Left cardiac atrium (tissue), 4 donors: ENCODE measurements at regions of chr5 and their contacts with region 1.

Region 1: DNA sequence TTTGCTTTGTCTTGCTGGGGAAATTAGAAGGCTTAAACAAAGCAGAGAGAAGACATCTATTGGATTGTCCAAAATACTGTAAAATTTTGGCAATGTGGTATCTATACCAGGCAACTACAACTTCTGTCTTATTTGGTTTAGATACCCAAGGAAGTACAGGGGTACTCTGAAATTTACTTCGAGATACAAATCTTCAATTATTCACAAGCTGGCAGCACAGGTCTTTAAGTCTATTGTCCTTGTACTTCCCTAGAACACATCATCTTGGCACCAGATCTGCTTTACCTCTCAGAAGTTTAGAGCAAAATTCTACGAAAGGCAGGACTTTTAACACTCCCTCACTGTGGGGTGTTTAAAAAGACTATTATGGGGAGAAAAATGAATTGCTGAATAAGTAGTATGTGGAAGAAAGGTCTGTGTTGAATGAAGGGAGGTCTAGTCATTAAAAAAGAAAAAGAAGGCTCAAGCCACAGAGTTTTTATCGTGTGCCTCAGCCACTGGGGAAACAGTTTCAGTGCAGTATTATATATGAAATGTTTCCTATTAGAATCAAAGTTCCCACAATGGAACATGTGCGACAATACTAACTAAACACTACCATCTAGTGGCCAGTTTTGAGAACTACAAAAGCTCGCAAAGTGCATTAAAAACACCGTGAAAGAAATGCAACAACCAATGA is 93.7 kb downstream of the PDE4D start:
- DNase-seq: no peak
- ATAC-seq: peak; percentile 65 to 77

Region 2: DNA sequence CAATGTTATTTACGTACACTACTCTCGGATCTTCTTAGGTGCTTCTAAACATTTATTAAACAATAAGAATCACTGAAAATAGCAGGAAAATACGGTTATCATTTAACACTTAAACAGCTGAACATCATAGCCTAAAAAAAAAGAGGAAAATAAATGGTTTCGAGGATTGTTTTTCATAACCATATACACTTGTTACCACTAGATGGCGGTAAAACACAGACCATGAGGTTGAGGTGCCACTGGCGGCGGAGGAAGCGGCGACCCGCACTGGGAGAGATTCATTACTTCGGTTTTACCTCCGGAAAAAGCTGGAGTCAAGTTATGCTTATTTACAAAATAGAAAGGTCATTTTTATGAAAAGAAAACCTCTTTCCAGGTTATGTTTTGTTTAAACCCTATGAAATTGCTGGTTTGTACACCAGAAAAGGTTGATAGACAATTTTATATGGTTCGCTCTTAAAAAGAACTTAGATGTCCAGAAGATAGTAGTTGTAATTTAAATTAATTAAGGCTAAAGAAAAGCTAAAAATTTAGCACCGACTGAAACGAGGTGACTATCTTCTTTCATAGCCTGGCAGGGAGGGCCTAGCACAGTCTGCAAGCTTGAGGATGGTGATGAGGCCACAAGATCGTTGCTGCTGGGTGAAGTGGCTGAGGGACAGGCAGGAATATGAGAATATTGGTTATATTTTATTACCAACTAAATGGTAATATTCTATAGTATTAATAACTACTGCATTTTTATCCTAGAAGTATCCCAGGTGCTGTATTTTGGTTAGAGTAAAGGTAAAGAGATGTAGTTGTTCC is 611.2 kb before region 1 on chr5:
- intact Hi-C with region 1: loop called in 1 of 2 experiments (anchors 10 kb)
- DNase-seq: peak; percentile 79
- ATAC-seq: peak; percentile 80 to 82

Region 3: GRCh38 chr5:59390074-59390659 is 409.6 kb before region 1 on chr5:
- intact Hi-C with region 1: loop called (anchors 2 to 5 kb)
- DNase-seq: no peak
- ATAC-seq: no peak

Region 4: GRCh38 chr5:59506285-59506877 is 293.4 kb before region 1 on chr5:
- intact Hi-C with region 1: loop called in 1 of 2 experiments (anchors 5 kb)
- DNase-seq: no peak
- ATAC-seq: no peak

Region 5: GRCh38 chr5:59540366-59540765 is 259.4 kb before region 1 on chr5:
- intact Hi-C with region 1: no loop called
- DNase-seq: no peak
- ATAC-seq: no peak

Region 6: DNA sequence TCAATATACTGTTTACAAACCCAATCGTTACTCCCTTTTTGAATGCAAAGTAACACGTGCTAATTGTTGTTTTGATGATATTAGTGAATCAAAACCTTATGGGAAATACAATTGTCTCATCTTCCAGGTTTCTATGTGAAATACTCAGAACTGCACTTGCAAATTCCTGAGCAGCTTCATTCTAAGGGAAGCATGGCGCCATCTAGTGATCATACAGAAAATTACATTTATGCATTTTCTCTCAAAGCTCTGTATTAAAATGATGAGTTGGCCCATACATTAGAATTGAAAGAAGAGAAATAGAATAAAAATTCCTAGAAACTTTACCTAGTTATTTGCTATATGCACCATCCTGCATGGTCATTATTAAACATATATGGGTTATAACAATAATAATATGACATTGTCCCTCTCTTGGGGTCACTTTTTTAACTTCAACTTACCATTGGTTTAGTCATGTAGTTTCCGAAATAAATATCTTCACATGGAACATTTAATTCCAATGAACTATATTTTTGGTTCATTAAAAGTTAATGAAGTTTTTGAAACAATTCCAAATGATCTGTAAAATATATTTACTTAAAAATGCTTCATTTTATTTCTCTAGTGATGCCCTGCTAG is 126.3 kb before region 1 on chr5:
- intact Hi-C with region 1: loop called in 1 of 2 experiments (anchors 10 kb)
- DNase-seq: no peak
- ATAC-seq: peak in 1 of 2 donors; percentile 33

Region 7: GRCh38 chr5:59999056-59999455 is 199.2 kb after region 1 on chr5:
- intact Hi-C with region 1: no loop called
- DNase-seq: no peak
- ATAC-seq: no peak